H1 (cell line): ENCODE measurements at regions of chr11 and their contacts with region 1.

Region 1: DNA sequence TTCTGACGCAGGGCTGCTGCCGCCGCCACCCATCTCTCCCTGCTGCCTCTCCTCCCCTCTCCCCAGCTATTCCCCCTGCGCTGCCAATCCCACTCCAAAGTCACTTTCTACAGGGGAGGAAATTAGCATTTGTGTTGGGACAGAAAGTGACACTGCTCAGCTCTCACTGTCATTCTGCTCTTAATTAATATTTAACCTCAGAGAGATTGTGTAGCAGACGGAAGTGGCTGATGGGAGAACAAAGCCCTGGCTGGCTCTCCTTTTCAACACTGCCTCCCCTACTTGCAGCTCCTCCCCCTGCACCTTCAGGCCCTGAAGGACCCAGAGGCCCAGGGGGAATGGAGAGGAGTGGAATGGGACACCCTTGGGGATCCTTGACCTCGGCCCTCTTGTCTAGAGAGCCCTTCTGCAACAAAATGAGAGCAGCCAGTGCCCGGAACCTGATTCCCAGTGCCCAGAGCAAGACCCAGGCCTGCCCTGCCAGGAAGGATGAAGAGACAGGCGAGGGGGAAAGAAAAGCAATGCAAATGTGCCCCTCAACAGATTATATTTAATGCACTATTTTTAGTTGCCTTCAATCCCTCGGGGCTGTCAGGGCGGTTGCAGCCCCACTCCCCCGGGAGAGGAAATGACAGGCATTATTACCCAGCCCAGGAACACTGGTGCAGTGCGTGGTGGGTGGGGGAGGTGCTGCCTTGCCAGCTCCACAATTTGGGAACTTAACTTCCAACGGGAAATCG is 14.6 kb upstream of the NRGN start:
- DNase-seq: no peak
- H3K4me3 ChIP-seq: peak overlapping the region in 1 of 4 experiments; percentile 12; a peak in 1 of 8 replicates
- H3K27ac ChIP-seq: no peak overlapping the region
- H3K4me1 ChIP-seq: peaks cover 8 to 15% (median 10%) of the 10 kb centered on the region in 4 experiments
- H3K27me3 ChIP-seq: peaks cover 18 to 46% (median 37%) of the 10 kb centered on the region in 4 experiments
- CTCF ChIP-seq: no peak
- EP300 ChIP-seq: no peak
- POLR2A ChIP-seq: no peak
- RAD21 ChIP-seq: no peak

Region 2: GRCh38 chr11:124612045-124612444 is 113.1 kb before region 1 on chr11:
- CTCF ChIA-PET with region 1: no interaction called
- POLR2A ChIA-PET with region 1: no interaction called
- DNase-seq: no peak
- H3K4me3 ChIP-seq: no peak overlapping the region
- H3K27ac ChIP-seq: no peak overlapping the region
- H3K4me1 ChIP-seq: no peaks in the 10 kb centered on the region
- H3K27me3 ChIP-seq: no peaks in the 10 kb centered on the region
- CTCF ChIP-seq: no peak
- EP300 ChIP-seq: no peak
- POLR2A ChIP-seq: no peak
- RAD21 ChIP-seq: no peak

Region 3: DNA sequence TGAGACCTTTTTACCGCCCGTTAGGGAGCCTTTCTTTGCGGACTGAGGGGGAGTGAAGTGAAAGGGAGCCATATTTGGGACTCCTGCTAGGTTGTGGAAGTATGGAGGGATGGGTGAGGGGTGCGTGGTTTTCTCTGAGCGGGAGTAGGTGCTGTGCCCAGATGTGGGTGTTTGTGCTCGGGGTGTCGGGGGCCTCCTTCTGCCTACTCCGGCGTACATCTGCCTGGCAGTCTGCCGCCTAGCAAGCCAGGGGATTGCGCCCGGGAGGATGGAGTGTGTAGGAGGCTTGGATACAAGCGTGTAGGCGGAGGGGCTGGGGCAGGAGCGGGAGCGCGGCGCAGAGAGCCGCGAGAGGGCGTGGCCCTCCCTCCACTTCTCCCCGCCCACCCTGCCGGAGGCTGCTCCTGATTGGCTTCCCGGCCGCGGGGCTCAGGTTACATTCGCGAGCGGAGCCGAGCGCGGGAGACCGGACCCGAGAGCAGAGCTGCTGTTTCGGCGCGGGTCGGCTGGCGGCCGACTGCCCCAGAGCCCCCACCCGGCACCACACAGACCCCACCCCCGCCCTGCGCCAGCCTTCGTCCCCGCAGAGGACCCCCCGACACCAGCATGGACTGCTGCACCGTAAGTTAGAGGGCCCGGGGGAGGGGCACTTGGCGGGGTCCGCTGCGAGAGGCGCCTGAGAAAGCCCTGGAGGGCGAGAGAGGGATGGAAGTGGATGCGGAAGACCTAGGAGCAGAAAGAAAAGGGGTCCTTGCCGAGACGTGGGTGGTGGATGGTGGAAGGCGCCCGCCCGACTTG is 14.5 kb after region 1 on chr11 and contains the start of gene NRGN:
- CTCF ChIA-PET with region 1: interaction called, 382 read pairs
- POLR2A ChIA-PET with region 1: interaction called, 11 read pairs
- DNase-seq: peak; percentile 76 to 95
- H3K4me3 ChIP-seq: peak within 1 kb of the TSS; percentile 40 to 68 (median 62)
- H3K27ac ChIP-seq: no peak within 1 kb of the TSS
- H3K4me1 ChIP-seq: peaks cover 0 to 15% (median 2%) of the 10 kb centered on the region in 4 experiments; a peak in 5 of 7 replicates
- H3K27me3 ChIP-seq: peaks cover 69 to 93% (median 83%) of the 10 kb centered on the region in 4 experiments
- CTCF ChIP-seq: no peak
- EP300 ChIP-seq: no peak
- POLR2A ChIP-seq: no peak
- RAD21 ChIP-seq: no peak
- total RNA-seq, gene NRGN: 0.60 and 0.75 TPM in 2 replicates

Region 4: GRCh38 chr11:124746621-124747243 is 21.6 kb after region 1 on chr11:
- CTCF ChIA-PET with region 1: interaction called, 382 read pairs
- POLR2A ChIA-PET with region 1: no interaction called
- DNase-seq: peak; percentile 77 to 88
- H3K4me3 ChIP-seq: peak overlapping the region; percentile 72 to 83 (median 77)
- H3K27ac ChIP-seq: no peak overlapping the region
- H3K4me1 ChIP-seq: peaks cover 0 to 19% (median 16%) of the 10 kb centered on the region in 4 experiments; a peak in 6 of 7 replicates
- H3K27me3 ChIP-seq: peaks cover 92 to 99% (median 97%) of the 10 kb centered on the region in 4 experiments
- CTCF ChIP-seq: peak; percentile 39 to 73 (median 71); a peak in 3 of 4 replicates
- EP300 ChIP-seq: no peak
- POLR2A ChIP-seq: no peak
- RAD21 ChIP-seq: peak; percentile 29 to 36; a peak in 2 of 4 replicates